ENCODE measurements at regions of chr2 and their contacts with region 1.

Region 1: GRCh38 chr2:196291873-196292800 is 120.8 kb upstream of the STK17B start:
- DNase-seq: no peak
- ATAC-seq: peak; percentile 59
- H3K4me3 Mint-ChIP-seq: peak overlapping the region; percentile 57
- H3K27ac Mint-ChIP-seq: peak overlapping the region; percentile 74
- H3K4me1 Mint-ChIP-seq: peaks cover 54% of the 10 kb centered on the region
- H3K27me3 Mint-ChIP-seq: no peaks in the 10 kb centered on the region
- CTCF ChIP-seq: no peak

Region 2: DNA sequence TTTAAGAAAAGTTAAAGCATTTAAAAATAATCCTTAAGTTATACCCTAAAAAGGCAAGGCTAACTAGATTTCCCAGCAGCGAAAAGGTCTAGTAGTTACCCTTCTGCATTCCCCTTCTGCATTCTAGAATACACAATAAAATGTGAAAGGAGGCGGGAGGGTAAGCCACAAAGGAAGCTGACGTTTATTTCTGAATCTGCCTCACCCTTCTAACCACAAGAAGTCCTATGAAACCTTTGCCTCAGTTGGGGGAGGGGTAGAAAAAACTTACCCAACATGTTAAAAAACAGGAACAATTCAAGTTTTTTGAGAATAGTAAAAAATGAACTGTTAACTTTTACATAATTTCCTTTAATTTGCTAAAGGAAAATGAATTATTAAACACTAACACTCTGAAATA is 132.0 kb before region 1 on chr2:
- CTCF ChIA-PET with region 1: no interaction called
- POLR2A ChIA-PET with region 1: no interaction called
- intact Hi-C with region 1: no loop called
- DNase-seq: no peak
- ATAC-seq: peak; percentile 75
- H3K4me3 Mint-ChIP-seq: peak overlapping the region; percentile 57
- H3K27ac Mint-ChIP-seq: peak overlapping the region; percentile 84
- H3K4me1 Mint-ChIP-seq: peaks cover 86% of the 10 kb centered on the region
- H3K27me3 Mint-ChIP-seq: no peaks in the 10 kb centered on the region
- CTCF ChIP-seq: no peak

Region 3: GRCh38 chr2:196639180-196640030 is 347.3 kb after region 1 on chr2 and contains the start of gene CCDC150:
- CTCF ChIA-PET with region 1: no interaction called
- POLR2A ChIA-PET with region 1: no interaction called
- intact Hi-C with region 1: loop called (anchors 5 kb)
- DNase-seq: peak; percentile 90
- ATAC-seq: peak; percentile 100
- H3K4me3 Mint-ChIP-seq: peak within 1 kb of the TSS; percentile 89
- H3K27ac Mint-ChIP-seq: peak within 1 kb of the TSS; percentile 53
- H3K4me1 Mint-ChIP-seq: peaks cover 14% of the 10 kb centered on the region
- H3K27me3 Mint-ChIP-seq: no peaks in the 10 kb centered on the region
- CTCF ChIP-seq: no peak
- total RNA-seq, gene CCDC150: 2.3 and 2.6 TPM in 2 replicates

Region 4: GRCh38 chr2:196758474-196759377 is 466.6 kb after region 1 on chr2:
- CTCF ChIA-PET with region 1: no interaction called
- POLR2A ChIA-PET with region 1: no interaction called
- intact Hi-C with region 1: loop called (anchors 5 kb)
- DNase-seq: no peak
- ATAC-seq: no peak
- H3K4me3 Mint-ChIP-seq: no peak overlapping the region
- H3K27ac Mint-ChIP-seq: no peak overlapping the region
- H3K4me1 Mint-ChIP-seq: no peaks in the 10 kb centered on the region
- H3K27me3 Mint-ChIP-seq: no peaks in the 10 kb centered on the region
- CTCF ChIP-seq: no peak

Region 5: GRCh38 chr2:197011799-197012641 is 719.9 kb after region 1 on chr2:
- CTCF ChIA-PET with region 1: no interaction called
- POLR2A ChIA-PET with region 1: no interaction called
- intact Hi-C with region 1: loop called (anchors 10 kb)
- DNase-seq: no peak
- ATAC-seq: peak; percentile 57
- H3K4me3 Mint-ChIP-seq: no peak overlapping the region
- H3K27ac Mint-ChIP-seq: peak overlapping the region; percentile 74
- H3K4me1 Mint-ChIP-seq: peaks cover 5% of the 10 kb centered on the region
- H3K27me3 Mint-ChIP-seq: no peaks in the 10 kb centered on the region
- CTCF ChIP-seq: no peak

Region 6: GRCh38 chr2:197378494-197379307 is 1086.6 kb after region 1 on chr2:
- CTCF ChIA-PET with region 1: no interaction called
- POLR2A ChIA-PET with region 1: no interaction called
- intact Hi-C with region 1: loop called (anchors 5 kb)
- DNase-seq: peak; percentile 29
- ATAC-seq: peak; percentile 66
- H3K4me3 Mint-ChIP-seq: no peak overlapping the region
- H3K27ac Mint-ChIP-seq: no peak overlapping the region
- H3K4me1 Mint-ChIP-seq: peaks cover 11% of the 10 kb centered on the region
- H3K27me3 Mint-ChIP-seq: no peaks in the 10 kb centered on the region
- CTCF ChIP-seq: peak; percentile 43

Region 7: DNA sequence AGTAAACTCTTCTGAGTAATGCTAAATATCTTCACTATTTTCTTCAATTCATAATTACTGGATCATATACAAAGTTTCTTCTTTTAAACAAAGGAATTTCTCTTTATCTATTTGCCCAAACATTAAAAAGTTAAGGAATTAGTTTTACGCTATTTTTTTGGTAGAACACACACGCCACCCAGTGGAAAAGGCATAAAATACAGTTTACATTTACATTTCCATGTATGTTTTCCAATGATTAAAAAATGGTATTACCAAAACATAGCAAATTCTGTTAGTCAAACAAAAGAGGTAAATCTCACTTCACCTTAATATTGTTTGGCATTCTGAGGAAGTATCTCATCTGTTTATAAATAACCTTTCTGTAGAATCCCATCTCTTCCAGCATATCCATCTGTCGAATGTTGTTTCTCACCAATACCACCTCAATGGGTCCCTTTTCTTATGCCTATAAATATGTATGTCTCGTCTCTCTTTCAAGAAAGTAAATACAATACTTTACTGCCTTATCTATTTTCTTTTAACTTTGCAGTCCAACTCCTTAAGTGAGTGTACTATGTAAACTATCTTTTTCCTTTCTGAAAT is 1485.8 kb after region 1 on chr2:
- CTCF ChIA-PET with region 1: no interaction called
- POLR2A ChIA-PET with region 1: no interaction called
- intact Hi-C with region 1: loop called (anchors 10 kb)
- DNase-seq: no peak
- ATAC-seq: no peak
- H3K4me3 Mint-ChIP-seq: no peak overlapping the region
- H3K27ac Mint-ChIP-seq: no peak overlapping the region
- H3K4me1 Mint-ChIP-seq: no peaks in the 10 kb centered on the region
- H3K27me3 Mint-ChIP-seq: peaks cover 7% of the 10 kb centered on the region
- CTCF ChIP-seq: peak; percentile 23

Region 8: GRCh38 chr2:198296665-198297308 is 2004.7 kb after region 1 on chr2:
- CTCF ChIA-PET with region 1: no interaction called
- POLR2A ChIA-PET with region 1: no interaction called
- intact Hi-C with region 1: loop called (anchors 5 kb)
- DNase-seq: no peak
- ATAC-seq: peak; percentile 64
- H3K4me3 Mint-ChIP-seq: no peak overlapping the region
- H3K27ac Mint-ChIP-seq: no peak overlapping the region
- H3K4me1 Mint-ChIP-seq: peaks cover 4% of the 10 kb centered on the region
- H3K27me3 Mint-ChIP-seq: peaks cover 2% of the 10 kb centered on the region
- CTCF ChIP-seq: peak; percentile 83

Measured in activated B cell treated with CpG ODN at 0.5 μM for 24 hours (primary cell).